Sciatic nerve (tissue), 2 donors: ENCODE measurements at regions of chr20 and their contacts with region 1.

Region 1: DNA sequence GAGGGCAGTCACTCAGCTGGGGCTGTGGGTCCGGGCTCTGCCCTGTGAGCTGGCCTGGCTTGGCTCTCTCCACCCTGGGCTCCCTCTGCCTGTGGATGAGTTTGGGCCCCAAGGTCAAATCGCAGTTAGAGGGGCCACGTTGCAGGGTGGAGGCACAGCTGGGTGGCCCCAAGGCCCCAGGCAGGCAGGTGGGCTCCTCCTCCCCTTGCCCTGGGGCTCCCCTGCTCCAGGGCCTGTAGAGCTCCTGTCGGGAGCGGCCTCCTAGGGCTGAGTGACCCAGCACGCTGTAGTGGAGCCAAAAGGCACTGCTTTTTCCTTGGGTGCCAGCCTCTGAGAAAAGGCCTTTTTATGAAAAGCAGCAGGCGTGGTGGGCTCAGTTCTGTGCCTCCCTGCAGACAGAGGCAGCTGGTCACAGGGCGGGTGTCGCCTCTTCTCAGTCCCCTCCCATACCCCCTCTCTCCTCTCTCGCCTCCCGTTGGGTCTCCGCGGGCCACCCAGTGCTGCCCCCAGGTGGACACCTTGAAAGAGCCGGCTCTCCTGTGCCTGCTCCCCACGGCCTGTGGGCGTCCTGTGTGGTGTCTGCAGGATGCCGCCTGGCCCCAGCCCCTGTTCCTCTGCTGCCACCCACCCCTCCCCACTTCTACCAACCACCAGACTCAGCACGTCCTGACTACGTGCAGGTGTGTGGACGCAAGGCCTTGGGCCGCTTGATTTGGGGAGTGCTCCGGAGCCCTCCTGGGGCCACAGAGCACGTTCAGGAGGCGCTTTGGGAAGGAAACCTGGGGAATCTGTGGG is 13.2 kb downstream of the SS18L1 start:
- DNase-seq: peak; percentile 80
- ATAC-seq: peak; percentile 77

Region 2: GRCh38 chr20:62193079-62194025 is 36.6 kb after region 1 on chr20:
- intact Hi-C with region 1: loop called (anchors 2 kb)
- DNase-seq: no peak
- ATAC-seq: no peak